ENCODE measurements at regions of chr6 and their contacts with region 1.

Region 1: DNA sequence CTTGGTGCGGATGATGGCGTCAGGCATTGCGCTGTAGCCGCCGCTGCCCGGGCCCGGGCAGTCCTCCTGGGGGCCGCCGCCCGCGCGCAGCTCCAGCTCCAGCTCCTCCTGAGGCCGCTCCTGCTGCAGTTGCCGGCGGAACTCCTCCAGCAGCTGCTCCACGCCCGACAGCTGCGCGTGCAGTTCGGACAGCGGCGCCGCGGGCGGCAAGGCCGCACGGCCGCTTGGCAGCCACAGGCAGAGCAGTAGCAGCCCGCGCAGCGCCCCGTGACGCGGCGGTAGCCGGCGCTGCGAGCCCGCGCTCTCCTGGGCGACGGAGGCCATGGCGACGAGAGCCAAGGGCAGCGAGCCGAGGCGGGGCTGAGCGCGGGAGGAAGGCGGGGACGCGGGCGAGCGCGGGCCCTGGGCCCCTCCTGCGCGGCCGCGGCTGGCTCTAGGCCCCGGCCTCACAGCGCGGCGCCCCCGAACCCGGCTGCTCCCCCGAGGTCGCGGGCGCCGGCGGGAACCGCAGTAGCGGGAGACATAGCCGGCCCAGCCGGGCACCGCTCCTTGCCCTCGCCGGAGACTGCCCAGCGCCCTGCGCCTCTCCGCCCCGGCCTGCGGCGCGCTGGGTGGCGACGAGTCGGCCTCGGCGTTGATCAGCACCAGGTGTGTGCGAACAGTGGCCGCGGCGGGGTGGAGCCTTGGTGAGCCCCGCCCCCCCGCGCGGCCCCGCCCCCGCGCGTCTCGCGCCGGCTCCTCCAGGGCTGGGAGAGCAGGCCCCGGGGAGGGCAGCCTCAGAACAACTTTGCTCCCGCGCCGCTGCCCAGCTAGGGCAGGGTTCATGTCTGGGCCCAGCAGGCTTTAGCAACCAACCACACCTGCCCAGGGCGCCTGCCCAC is at the start of gene LRP11:
- DNase-seq: peak; percentile 75 to 85
- ATAC-seq: peak; percentile 91 to 95 (median 94)
- H3K4me3 ChIP-seq: peak within 1 kb of the TSS; percentile 50 to 82 (median 72)
- H3K27ac ChIP-seq: peak within 1 kb of the TSS; percentile 63 to 95 (median 90)
- H3K4me1 ChIP-seq: peaks cover 0 to 31% (median 19%) of the 10 kb centered on the region in 9 donors
- H3K27me3 ChIP-seq: no peaks in the 10 kb centered on the region
- CTCF ChIP-seq: peak in 1 of 9 donors; percentile 1
- total RNA-seq, gene LRP11: 7.6 to 21.0 (median 15.3) TPM

Region 2: DNA sequence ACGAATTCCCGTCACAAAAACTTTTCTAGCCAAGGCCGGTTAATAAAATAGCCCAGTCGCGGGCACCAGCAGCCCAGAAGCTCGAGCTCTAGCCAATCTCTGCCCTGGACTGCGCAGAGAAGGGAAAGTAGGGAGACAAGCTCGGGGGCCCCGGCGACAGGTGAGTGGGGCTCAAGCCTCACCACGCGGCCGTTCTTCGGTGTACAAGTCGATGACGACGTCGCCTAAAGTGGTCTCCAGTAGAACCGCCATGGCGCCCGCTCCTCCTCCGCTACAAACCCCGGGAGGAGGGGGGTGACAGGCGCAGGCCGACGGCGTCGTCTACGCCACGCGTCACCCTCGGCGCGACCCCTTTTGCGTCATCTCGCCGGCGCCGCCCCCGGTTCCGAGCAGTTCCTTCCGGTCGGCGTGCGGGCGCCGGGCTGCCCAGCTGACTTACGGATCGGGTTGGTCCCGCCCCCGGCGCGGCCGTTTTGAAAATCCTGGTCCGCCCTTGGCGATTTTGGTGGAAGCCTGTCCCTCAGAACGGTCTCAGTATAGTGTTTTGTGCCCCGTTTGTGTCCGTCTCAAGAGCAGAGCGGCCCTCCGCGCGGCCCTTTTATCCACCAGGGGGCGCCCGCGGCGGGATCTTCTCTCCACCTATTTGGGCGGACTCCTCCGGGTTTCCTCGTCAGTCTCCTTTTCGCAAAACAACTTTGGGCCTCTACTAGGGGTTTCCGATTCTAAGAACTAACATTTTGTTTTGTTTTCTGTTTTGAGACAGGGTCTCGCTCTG is 318.0 kb before region 1 on chr6 and contains the start of gene PPIL4:
- intact Hi-C with region 1: loop called in 1 of 10 experiments (anchors 5 kb)
- DNase-seq: peak; percentile 96 to 98
- ATAC-seq: peak; percentile 98 to 99 (median 99)
- H3K4me3 ChIP-seq: peak within 1 kb of the TSS; percentile 65 to 98 (median 86)
- H3K27ac ChIP-seq: peak within 1 kb of the TSS; percentile 84 to 99 (median 95)
- H3K4me1 ChIP-seq: peaks cover 6 to 39% (median 33%) of the 10 kb centered on the region in 9 donors
- H3K27me3 ChIP-seq: peaks cover 0 to 3% (median 0%) of the 10 kb centered on the region in 7 donors
- CTCF ChIP-seq: peak; percentile 66 to 91 (median 82)
- total RNA-seq, gene PPIL4: 15.2 to 22.0 (median 18.1) TPM

Region 3: GRCh38 chr6:149834513-149835481 is 29.1 kb before region 1 on chr6:
- intact Hi-C with region 1: loop called in 4 of 10 experiments (anchors 1 to 5 kb)
- DNase-seq: peak in 1 of 2 donors; percentile 54
- ATAC-seq: peak in 4 of 8 donors; percentile 37 to 72 (median 56)
- H3K4me3 ChIP-seq: no peak overlapping the region
- H3K27ac ChIP-seq: no peak overlapping the region
- H3K4me1 ChIP-seq: peaks cover 0 to 1% (median 0%) of the 10 kb centered on the region in 9 donors
- H3K27me3 ChIP-seq: no peaks in the 10 kb centered on the region
- CTCF ChIP-seq: peak; percentile 82 to 97 (median 93)

Region 4: DNA sequence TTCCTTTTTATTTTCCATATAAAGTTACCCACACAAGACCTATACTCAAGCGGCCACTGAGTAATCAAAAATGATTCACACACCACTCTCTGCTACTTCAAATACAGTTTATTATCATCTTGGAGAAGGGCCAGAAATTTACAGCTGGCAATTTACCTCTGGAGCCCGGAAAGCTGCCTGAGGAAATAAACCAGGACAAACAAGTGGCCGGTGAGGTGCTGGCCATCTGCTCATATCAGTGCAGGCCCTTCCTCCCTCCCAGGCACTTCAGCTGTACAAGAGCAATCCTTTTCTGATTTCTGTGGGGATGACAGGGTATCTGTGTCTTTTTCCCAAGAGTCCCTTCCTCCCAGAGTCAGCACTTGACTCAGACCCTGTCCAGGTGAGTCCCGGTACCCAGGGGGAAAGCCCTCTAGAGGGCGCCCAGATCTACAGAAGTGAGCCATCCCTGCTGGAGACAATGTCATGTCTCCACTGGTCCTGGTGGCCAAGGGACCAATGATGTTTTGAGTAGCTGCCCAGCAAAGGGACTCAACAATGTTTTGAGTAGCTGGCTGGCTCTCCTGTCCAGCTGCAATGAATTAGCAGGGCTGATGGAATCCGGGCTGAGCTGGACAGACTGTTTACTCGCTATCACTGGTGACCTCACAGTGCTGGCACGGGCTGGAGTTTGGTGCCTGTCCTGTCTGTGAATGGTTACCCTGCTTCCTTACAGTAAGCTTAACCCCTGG is 23.4 kb before region 1 on chr6:
- intact Hi-C with region 1: loop called in 3 of 10 experiments (anchors 2 kb)
- DNase-seq: peak; percentile 79 to 85
- ATAC-seq: peak; percentile 94 to 98 (median 96)
- H3K4me3 ChIP-seq: no peak overlapping the region
- H3K27ac ChIP-seq: peak overlapping the region in 4 of 10 donors; percentile 11 to 51 (median 33)
- H3K4me1 ChIP-seq: peaks cover 0 to 17% (median 11%) of the 10 kb centered on the region in 9 donors
- H3K27me3 ChIP-seq: no peaks in the 10 kb centered on the region
- CTCF ChIP-seq: peak; percentile 33 to 76 (median 60)

Region 5: DNA sequence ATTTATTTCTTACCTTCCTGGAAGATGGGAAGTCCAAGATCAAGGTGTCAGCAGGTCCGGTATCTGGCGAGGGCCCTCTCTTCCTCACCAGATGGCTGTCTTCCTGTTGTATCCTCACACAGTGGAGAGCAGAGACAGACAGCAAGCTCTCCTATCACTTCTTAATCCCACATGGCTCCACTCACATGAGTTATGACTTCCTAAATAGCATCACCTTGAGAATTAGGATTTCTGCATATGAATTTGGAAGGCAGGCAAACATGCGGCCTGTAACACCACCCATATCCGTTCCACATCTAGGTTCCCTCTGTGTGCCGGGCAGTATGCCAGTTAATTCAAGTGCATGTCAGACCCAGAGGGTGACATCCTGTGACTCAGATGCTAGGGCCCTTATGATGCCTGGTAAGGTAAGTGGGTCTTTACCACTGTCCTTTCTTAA is 31.9 kb after region 1 on chr6:
- intact Hi-C with region 1: loop called in 1 of 10 experiments (anchors 2 kb)
- DNase-seq: peak; percentile 30 to 68
- ATAC-seq: peak; percentile 19 to 89 (median 82)
- H3K4me3 ChIP-seq: no peak overlapping the region
- H3K27ac ChIP-seq: peak overlapping the region in 9 of 10 donors; percentile 51 to 83 (median 65)
- H3K4me1 ChIP-seq: peaks cover 6 to 35% (median 27%) of the 10 kb centered on the region in 9 donors
- H3K27me3 ChIP-seq: no peaks in the 10 kb centered on the region
- CTCF ChIP-seq: no peak

Measured in heart right ventricle (tissue), 16 donors.